ENCODE measurements at regions of chrX and their contacts with region 1.

Region 1: DNA sequence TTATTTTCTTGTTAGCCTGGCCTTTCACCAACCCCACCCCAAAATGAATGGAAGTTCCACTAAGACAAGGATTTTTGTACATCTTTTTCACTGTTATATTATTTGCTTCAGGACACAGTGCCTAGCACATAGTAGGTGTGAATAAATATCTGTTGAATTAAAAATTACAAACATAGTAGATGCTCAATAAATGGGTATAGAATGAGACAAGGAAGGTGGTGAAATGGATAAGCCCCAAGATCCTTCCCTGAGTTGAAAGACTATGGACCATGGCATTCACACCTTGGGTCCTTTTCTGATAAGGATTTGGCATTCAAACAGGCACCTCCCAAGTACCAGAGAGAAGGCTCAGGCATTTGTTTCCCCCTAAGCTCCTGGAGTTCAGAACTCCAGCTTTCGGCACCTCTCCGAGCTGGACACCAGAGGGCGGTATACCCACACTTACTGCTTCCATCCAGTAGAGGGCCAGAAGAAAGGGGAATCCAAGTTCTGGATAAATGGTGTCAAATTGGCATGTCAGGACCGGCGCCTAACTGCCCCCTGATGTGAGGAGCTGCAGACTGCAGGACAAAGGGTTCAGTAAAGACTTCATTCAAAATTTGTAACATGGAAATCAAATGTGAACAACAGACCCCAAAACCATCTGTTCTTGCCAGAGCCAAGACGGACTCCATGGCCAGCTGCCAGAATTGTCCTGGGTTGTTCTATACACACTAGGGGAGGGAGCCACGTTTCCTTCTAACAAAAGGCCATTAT is 193.0 kb downstream of the GPC3 start:
- DNase-seq: peak; percentile 31 to 67
- H3K4me3 ChIP-seq: peak overlapping the region in 1 of 2 donors; percentile 20
- H3K27ac ChIP-seq: no peak overlapping the region
- H3K4me1 ChIP-seq: no peaks in the 10 kb centered on the region
- H3K27me3 ChIP-seq: no peaks in the 10 kb centered on the region
- CTCF ChIP-seq: peak; percentile 78 to 83

Region 2: GRCh38 chrX:134396174-134396573 is 603.8 kb after region 1 on chrX:
- intact Hi-C with region 1: loop called (anchors 5 kb)
- DNase-seq: no peak
- H3K4me3 ChIP-seq: no peak overlapping the region
- H3K27ac ChIP-seq: no peak overlapping the region
- H3K4me1 ChIP-seq: no peaks in the 10 kb centered on the region
- H3K27me3 ChIP-seq: no peaks in the 10 kb centered on the region
- CTCF ChIP-seq: peak; percentile 45 to 49